Activated CD8-positive, alpha-beta T cell treated with anti-CD3 and anti-CD28 coated beads, Interleukin-2, amount 10 ng/mL, durations not matched to agents 7 days and 5 days (primary cell): ENCODE measurements at regions of chr16 and their contacts with region 1.

Region 1: DNA sequence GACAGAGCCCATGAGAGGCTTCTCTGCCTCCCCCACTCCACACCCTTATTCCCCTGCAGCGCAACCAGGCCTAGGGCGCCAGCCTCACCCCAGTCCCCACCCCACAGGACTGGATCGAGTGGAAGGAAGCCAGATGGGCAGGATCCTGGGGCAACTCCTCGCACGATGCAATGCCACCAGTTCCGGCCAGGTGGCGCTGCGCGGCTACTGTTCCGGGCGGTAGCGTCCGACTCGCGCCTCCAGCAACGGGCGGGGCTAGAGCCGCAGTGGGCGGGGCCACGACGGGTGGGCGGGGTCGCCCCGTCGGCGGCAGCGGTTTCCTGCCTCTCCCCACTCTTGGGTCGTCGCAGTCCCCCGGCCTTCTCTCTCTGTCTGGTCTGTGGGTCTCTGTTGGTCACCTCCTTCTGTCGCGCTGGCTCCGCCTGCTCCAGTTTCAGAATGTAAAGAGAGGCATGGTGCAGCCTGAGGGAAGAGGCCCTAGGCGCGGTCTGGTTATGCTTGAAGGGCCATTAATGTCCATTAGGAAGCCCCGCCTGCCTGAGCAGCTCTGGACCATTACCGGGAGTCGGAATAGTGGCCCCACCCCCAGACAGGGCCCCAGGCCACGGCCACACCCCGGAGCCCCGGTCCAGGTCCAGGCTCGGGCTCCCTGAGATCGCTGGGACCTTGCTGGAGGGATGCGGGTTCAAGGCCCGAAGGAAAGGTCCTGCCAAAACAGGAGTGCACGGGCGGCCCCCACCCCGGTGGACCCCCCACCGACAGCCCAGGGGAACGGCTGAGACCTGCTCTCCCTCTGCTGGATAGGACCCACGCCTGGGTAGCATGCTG is 3.4 kb upstream of the NHERF2 start:
- DNase-seq: peak; percentile 96
- ATAC-seq: peak; percentile 81
- H3K4me3 Mint-ChIP-seq: peak overlapping the region; percentile 66
- H3K27ac Mint-ChIP-seq: peak overlapping the region; percentile 82
- H3K4me1 Mint-ChIP-seq: peaks cover 27% of the 10 kb centered on the region
- H3K27me3 Mint-ChIP-seq: peaks cover 40% of the 10 kb centered on the region

Region 2: DNA sequence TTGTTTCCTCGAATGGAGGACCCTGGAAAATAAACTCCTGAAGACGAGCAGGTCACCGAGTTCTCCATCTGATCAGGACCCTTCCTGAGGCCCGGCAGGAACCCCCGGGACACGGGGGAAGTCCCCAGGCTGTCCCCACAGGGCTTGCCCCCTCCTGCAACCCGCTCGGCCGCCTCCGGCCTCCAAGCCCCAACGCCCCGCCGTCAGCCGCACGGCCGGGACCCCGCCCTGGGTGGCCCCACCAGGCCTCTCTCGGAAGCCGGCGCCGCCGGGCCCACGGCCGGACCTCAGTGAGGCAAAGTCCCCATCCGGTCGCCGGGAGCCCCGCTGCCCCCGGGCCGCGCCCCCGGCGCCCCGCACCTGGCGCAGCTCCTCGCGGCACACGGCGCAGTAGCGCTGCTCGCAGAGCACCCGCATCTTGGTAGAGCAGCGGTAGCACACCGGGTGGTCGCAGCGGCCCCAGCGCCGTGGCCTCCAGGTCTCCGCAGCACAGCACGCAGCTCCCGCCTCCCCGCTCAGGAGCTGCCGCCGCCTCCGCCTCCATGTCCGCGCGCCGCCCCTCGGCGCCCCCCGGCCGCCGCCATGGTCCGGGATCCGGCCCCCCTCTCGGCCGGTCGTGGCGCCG is 14.0 kb before region 1 on chr16:
- CTCF ChIA-PET with region 1: interaction called, 12 read pairs
- POLR2A ChIA-PET with region 1: interaction called, 3 read pairs
- DNase-seq: peak; percentile 33
- ATAC-seq: peak; percentile 59
- H3K4me3 Mint-ChIP-seq: peak overlapping the region; percentile 84
- H3K27ac Mint-ChIP-seq: peak overlapping the region; percentile 88
- H3K4me1 Mint-ChIP-seq: peaks cover 37% of the 10 kb centered on the region
- H3K27me3 Mint-ChIP-seq: no peaks in the 10 kb centered on the region

Region 3: DNA sequence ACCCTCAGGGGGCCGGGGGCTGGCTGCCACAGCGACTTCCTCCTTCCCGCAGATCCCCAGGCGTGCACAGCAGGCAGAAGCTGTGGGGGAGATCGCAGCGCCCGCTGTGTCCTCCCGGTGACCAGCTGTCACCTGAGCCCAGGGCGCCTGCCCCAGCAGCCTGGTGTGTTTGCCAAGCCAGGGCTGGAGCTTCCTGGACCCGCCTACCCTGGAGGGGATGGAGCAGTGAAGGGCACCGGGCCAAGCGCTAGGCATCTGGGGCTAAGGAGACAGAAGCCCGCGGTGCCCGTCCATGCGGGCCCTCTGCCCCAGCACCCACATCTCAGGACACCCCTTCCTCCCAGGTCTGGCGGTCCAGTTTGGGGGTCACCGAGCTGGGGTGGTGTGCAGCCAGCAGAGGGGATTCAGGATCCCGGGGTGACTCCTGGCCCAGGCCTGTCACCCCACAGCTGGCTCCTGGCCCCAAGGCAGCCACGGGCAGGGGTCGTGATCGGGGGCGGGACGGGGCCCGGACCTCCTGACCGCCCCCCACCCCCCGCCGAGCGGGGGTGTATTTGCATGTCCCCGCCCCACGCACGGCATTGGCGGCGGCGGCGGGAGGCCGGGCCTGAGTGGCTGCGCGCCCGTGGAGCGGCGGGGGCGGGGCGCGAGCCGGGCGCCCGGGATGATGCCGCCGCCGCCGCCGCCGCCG is 124.8 kb after region 1 on chr16 and contains the start of gene RAB26:
- CTCF ChIA-PET with region 1: interaction called, 25 read pairs
- POLR2A ChIA-PET with region 1: interaction called, 4 read pairs
- DNase-seq: peak; percentile 50
- ATAC-seq: peak; percentile 54
- H3K4me3 Mint-ChIP-seq: peak within 1 kb of the TSS; percentile 28
- H3K27ac Mint-ChIP-seq: no peak within 1 kb of the TSS
- H3K4me1 Mint-ChIP-seq: peaks cover 32% of the 10 kb centered on the region
- H3K27me3 Mint-ChIP-seq: no peaks in the 10 kb centered on the region
- total RNA-seq, gene RAB26: 0.26 to 0.31 TPM